ENCODE measurements at regions of chr17 and their contacts with region 1.

Region 1: DNA sequence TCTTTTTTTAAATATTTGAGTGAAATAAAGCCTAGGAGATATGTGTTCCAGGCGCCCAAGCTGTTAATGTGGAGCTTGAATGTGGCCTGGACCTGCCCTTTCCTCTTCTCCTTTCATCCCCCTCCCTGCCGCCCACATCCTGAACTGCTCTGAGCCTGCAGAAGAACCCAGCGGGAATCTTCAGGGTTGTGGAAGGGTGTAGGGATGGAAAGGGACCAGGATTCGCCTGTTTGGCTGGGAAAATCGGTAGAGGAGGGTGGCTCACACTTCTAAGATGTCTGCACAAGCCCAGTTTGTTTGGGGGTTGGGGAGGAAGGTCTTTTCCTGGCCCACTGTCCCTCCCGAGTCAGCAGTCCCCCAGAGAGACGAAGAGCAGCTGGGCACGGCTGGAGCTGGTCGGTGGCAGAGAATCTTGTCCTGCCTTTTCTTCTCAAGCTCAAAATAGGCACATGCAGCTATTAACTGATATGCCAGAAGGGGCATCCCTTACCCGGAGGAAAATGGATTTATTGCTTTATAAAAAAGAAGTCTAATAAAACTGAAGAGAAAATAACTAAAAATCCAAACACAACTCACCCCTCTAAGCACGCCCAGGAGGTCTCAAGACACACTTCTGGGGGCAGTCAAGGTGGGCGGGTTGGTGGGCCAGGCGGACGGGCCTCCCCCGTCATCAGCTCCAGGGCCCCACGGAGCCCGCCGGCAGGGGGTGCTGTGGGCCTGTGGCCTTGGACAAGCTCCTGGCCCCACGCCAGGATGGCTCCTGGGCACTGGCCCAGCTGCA is 11.5 kb upstream of the PITPNA start:
- DNase-seq: peak; percentile 64 to 97 (median 78)

Region 2: GRCh38 chr17:1628856-1629646 is 54.9 kb after region 1 on chr17:
- intact Hi-C with region 1: loop called (anchors 1 kb)
- DNase-seq: peak; percentile 94 to 99 (median 96)

Region 3: GRCh38 chr17:1648963-1649843 is 75.1 kb after region 1 on chr17:
- intact Hi-C with region 1: loop called (anchors 5 kb)
- DNase-seq: peak; percentile 90 to 99 (median 94)

Region 4: GRCh38 chr17:1661045-1661444 is 86.9 kb after region 1 on chr17:
- intact Hi-C with region 1: no loop called
- DNase-seq: peak in 2 of 10 donors; percentile 33 to 42

Region 5: GRCh38 chr17:1716076-1716995 is 142.2 kb after region 1 on chr17:
- intact Hi-C with region 1: loop called (anchors 10 kb)
- DNase-seq: peak; percentile 99 to 100 (median 100)

Measured in posterior cingulate gyrus (tissue), 11 donors.